Activated CD4-positive, alpha-beta T cell treated with anti-CD3 and anti-CD28 coated beads for 36 hours (primary cell): ENCODE measurements at regions of chr14 and their contacts with region 1.

Region 1: DNA sequence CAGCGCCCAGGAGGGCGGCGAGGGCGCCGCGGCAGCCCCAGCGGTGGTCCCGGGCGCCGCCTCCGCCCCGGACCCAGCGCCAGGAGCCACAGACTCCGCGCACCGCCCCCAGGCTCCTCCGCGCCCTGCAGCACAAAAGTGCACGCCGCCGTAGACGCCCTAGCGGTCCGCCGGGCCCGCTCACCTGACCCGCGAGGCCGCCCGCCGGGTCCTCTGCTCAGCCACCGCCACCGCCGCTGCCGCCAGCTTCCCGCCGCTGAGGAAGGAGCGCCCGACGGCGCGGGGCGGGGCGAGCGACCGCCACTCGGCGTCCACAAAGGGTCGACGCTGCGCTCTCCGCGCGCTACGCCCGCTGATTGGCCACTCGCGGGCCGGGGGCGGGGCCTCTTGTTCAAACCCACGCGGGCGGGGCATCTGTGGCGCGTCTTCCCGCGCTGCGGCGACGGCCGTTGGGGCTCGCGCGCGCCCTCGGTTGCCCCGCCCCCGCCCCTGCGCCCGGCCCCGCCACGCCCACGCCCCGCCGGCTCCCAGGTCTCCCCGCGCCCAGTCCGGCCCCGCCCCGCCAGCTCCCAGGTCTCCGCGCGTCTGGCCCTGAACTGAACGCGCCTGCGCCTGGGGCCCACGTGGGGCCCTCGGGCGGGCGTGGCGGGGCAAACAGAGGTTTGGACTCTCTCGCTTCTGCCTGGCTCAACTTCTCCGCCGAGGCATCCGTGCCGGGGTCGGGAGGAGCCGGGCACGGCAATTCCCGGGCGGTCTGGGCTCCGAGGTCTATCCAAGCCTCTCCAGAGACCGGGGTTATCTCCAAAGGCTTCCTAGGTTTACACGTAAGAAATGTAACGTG is at the start of gene CDCA4:
- DNase-seq: peak; percentile 99
- ATAC-seq: peak; percentile 82
- H3K4me3 Mint-ChIP-seq: peak within 1 kb of the TSS; percentile 94
- H3K27ac Mint-ChIP-seq: peak within 1 kb of the TSS; percentile 93
- H3K4me1 Mint-ChIP-seq: peaks cover 72% of the 10 kb centered on the region
- H3K27me3 Mint-ChIP-seq: no peaks in the 10 kb centered on the region
- total RNA-seq, gene CDCA4: 52.0 to 62.7 TPM

Region 2: GRCh38 chr14:103715052-103716000 is 1305.7 kb before region 1 on chr14 and contains the starts of genes XRCC3 and ZFYVE21:
- CTCF ChIA-PET with region 1: no interaction called
- POLR2A ChIA-PET with region 1: no interaction called
- intact Hi-C with region 1: loop called in 1 of 2 experiments (anchors 1 kb)
- DNase-seq: peak; percentile 100
- ATAC-seq: peak; percentile 96
- H3K4me3 Mint-ChIP-seq: peak within 1 kb of the TSS; percentile 81
- H3K27ac Mint-ChIP-seq: peak within 1 kb of the TSS; percentile 60
- H3K4me1 Mint-ChIP-seq: peaks cover 49% of the 10 kb centered on the region
- H3K27me3 Mint-ChIP-seq: no peaks in the 10 kb centered on the region
- total RNA-seq, gene XRCC3: 43.7 to 46.9 TPM
- total RNA-seq, gene ZFYVE21: 10.1 to 12.7 TPM

Region 3: DNA sequence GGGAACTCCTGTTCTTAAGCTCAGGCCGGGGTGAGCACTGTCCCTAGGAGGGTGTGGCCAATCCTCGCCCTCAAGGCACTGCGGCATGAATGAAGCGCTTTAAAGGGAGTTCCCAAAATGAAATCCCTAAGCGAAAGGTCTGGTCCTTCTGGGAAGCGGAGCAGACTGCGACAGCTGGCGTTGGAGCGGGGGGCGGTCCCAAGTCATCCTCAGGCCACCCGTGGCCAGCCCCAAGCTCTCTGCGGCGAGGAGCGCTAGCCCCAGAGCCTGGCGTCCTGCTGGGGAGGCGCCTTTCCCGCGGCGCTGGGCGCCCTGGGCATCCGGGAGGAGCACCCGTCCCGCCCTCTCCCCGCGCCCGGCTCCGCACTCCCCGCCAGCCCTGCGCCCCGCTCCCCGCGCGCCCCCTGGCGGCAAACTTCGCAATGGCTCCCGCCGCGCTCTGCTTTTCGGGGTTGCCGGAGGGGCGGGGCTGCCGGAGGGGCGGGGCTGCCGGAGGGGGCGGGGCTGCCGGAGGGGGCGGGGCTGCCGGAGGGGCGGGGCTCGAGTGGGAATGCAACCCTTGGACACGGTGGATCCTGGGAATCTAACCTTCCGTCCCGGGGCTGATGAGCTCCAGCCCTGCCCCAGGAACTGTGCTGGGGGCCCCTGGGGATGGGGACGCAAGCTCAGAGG is 194.7 kb before region 1 on chr14:
- CTCF ChIA-PET with region 1: no interaction called
- POLR2A ChIA-PET with region 1: interaction called, 3 read pairs
- intact Hi-C with region 1: loop called in 1 of 2 experiments (anchors 1 kb)
- DNase-seq: peak; percentile 97
- ATAC-seq: peak; percentile 93
- H3K4me3 Mint-ChIP-seq: peak overlapping the region; percentile 73
- H3K27ac Mint-ChIP-seq: no peak overlapping the region
- H3K4me1 Mint-ChIP-seq: peaks cover 13% of the 10 kb centered on the region
- H3K27me3 Mint-ChIP-seq: peaks cover 13% of the 10 kb centered on the region

Region 4: GRCh38 chr14:104985675-104986525 is 35.1 kb before region 1 on chr14 and contains the start of gene CLBA1:
- CTCF ChIA-PET with region 1: no interaction called
- POLR2A ChIA-PET with region 1: interaction called, 21 read pairs
- intact Hi-C with region 1: loop called (anchors 1 to 5 kb)
- DNase-seq: peak; percentile 93
- ATAC-seq: peak; percentile 99
- H3K4me3 Mint-ChIP-seq: peak within 1 kb of the TSS; percentile 64
- H3K27ac Mint-ChIP-seq: peak within 1 kb of the TSS; percentile 47
- H3K4me1 Mint-ChIP-seq: peaks cover 5% of the 10 kb centered on the region
- H3K27me3 Mint-ChIP-seq: no peaks in the 10 kb centered on the region
- total RNA-seq, gene CLBA1: 1.1 to 1.9 TPM

Region 5: DNA sequence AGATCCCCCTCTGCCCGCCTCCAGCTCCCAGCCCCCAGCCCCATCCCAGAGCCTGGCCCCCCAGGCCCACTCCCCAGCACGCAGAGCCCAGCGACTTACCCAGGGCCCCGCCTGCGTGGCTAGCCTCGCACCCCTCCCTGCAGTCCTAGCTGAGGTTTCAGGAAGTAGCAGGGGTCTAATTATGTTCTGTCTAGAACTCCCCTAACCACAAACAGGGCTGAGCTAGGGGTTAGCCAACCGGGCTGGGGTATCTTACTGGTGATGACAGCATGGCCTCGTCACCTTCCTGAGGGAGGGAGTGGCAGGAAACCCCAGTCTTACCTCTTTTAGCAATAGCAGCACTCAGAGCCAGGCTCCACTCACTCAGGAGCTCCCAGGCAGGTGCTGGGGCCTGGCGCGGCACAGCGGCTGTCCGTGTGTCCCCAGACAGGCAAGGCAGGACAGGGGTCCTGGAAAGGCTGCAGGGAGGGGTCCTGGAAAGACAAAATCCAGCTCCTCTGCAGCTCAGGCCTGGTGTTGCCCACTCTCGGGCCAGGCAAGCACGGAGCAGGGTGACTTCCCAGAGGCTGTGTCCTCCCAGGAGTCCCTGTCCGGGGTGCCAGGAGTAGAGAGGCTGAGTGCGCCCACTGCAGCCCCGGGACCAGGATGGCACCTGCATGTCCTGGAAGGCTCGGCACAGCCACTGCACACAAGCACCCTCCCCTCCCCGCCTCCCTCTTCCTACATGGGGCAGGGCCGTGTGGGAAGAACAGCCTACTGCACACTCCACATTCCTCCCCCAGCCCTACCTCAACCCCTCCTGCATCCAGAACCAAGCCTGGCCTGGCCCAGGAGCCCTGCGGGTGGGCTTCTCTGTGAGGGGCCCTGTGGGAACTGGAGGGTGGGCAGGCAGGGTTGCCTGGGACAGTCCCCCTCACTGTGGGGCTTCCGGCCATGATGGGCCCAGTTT is 44.5 kb after region 1 on chr14 and contains the start of gene GPR132:
- CTCF ChIA-PET with region 1: interaction called, 7 read pairs
- POLR2A ChIA-PET with region 1: interaction called, 9 read pairs
- intact Hi-C with region 1: loop called (anchors 1 to 2 kb)
- DNase-seq: peak; percentile 93
- ATAC-seq: peak; percentile 78
- H3K4me3 Mint-ChIP-seq: peak within 1 kb of the TSS; percentile 92
- H3K27ac Mint-ChIP-seq: peak within 1 kb of the TSS; percentile 96
- H3K4me1 Mint-ChIP-seq: peaks cover 74% of the 10 kb centered on the region
- H3K27me3 Mint-ChIP-seq: no peaks in the 10 kb centered on the region
- total RNA-seq, gene GPR132: 27.7 to 35.4 TPM

Region 6: GRCh38 chr14:105223260-105223659 is 202.2 kb after region 1 on chr14:
- CTCF ChIA-PET with region 1: no interaction called
- POLR2A ChIA-PET with region 1: no interaction called
- intact Hi-C with region 1: no loop called
- DNase-seq: no peak
- ATAC-seq: no peak
- H3K4me3 Mint-ChIP-seq: no peak overlapping the region
- H3K27ac Mint-ChIP-seq: no peak overlapping the region
- H3K4me1 Mint-ChIP-seq: no peaks in the 10 kb centered on the region
- H3K27me3 Mint-ChIP-seq: no peaks in the 10 kb centered on the region

Region 7: DNA sequence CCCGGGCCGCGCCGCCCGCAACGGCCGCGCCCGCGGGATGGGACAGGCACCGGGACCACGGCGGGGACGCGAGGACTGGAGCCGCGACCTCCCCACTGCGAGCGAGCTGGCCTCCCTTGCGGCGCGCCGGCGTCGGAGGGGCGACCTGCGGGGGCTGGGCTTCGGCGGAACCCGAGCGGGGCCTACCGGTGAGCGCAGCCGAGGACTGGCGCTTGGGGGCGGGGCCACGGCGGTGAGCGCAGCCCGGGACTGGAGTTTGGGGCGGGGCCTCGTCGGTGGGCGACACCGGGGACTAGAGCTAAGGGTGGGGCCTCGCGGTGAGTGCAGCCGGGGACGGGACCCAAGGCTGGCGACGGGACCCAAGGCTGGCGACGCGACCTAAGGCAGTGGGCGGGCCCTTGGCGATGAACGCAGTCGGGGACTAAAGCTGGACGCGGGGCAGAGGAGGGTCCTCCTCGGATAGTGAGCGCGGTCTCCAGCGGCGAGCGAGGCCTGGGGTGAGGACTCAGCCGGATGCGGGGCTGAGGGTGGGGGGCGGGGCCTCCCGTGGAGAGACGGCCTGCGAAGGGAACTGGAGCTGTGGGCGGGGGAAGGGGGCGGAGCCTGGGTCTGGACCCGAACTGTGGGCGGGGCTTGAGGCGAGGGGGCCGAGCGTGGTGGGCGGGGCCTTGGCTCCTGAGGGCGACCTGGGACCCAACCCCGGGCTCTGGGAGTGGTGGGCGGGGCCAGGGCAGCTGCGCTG is 279.9 kb after region 1 on chr14 and contains the start of gene BRF1:
- CTCF ChIA-PET with region 1: no interaction called
- POLR2A ChIA-PET with region 1: interaction called, 3 read pairs
- intact Hi-C with region 1: loop called in 1 of 2 experiments (anchors 1 kb)
- DNase-seq: peak; percentile 100
- ATAC-seq: peak; percentile 92
- H3K4me3 Mint-ChIP-seq: peak within 1 kb of the TSS; percentile 86
- H3K27ac Mint-ChIP-seq: peak within 1 kb of the TSS; percentile 86
- H3K4me1 Mint-ChIP-seq: peaks cover 39% of the 10 kb centered on the region
- H3K27me3 Mint-ChIP-seq: no peaks in the 10 kb centered on the region
- total RNA-seq, gene BRF1: 20.0 to 28.1 TPM